OCI-LY7 (cell line): ENCODE measurements at regions of chr9 and their contacts with region 1.

Region 1: GRCh38 chr9:34252670-34253459 is 74.0 kb downstream of the UBAP1 start:
- DNase-seq: peak; percentile 65
- H3K4me3 ChIP-seq: no peak overlapping the region
- H3K27ac ChIP-seq: no peak overlapping the region
- H3K4me1 ChIP-seq: no peaks in the 10 kb centered on the region
- CTCF ChIP-seq: peak; percentile 87

Region 2: DNA sequence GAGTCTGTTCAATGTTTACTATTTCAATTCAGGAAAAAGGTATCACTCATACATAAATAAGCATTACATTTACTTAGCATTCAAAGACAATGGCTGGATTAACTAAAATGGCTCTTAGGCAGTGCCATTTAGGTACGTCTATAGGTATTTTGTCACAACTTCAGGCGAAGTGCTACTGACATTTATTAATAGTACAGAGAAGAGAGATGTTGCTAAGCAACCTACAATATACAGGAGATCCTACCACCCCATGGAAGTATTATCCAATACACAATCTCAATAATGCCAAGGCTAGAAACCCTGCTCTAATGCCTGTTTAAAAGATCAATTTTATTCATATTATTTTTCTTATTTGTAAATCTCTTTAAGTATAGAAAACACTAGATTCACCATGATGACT is 280.2 kb before region 1 on chr9:
- CTCF ChIA-PET with region 1: no interaction called
- POLR2A ChIA-PET with region 1: no interaction called
- intact Hi-C with region 1: loop called (anchors 5 kb)
- DNase-seq: no peak
- H3K4me3 ChIP-seq: no peak overlapping the region
- H3K27ac ChIP-seq: no peak overlapping the region
- H3K4me1 ChIP-seq: no peaks in the 10 kb centered on the region
- CTCF ChIP-seq: no peak

Region 3: DNA sequence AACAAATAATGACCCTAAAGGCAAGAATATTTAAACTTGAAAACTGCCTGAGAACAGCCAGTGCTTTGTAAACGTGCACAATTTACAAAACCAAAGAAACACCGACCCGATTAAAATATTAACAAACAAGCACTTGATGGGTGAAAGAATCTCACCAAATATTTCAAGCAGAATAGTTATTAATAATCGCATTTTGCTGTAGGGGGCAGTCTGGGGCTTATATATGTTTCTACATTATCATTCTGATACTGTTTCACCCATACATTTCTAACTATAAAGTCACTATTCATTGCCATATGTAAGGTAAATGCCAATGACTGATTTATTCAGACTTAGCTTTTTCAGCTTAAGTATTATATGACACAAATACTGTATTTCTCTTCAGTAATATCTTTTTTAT is 241.9 kb before region 1 on chr9:
- CTCF ChIA-PET with region 1: no interaction called
- POLR2A ChIA-PET with region 1: no interaction called
- intact Hi-C with region 1: loop called (anchors 5 kb)
- DNase-seq: peak; percentile 64
- H3K4me3 ChIP-seq: no peak overlapping the region
- H3K27ac ChIP-seq: no peak overlapping the region
- H3K4me1 ChIP-seq: no peaks in the 10 kb centered on the region
- CTCF ChIP-seq: peak; percentile 85

Region 4: DNA sequence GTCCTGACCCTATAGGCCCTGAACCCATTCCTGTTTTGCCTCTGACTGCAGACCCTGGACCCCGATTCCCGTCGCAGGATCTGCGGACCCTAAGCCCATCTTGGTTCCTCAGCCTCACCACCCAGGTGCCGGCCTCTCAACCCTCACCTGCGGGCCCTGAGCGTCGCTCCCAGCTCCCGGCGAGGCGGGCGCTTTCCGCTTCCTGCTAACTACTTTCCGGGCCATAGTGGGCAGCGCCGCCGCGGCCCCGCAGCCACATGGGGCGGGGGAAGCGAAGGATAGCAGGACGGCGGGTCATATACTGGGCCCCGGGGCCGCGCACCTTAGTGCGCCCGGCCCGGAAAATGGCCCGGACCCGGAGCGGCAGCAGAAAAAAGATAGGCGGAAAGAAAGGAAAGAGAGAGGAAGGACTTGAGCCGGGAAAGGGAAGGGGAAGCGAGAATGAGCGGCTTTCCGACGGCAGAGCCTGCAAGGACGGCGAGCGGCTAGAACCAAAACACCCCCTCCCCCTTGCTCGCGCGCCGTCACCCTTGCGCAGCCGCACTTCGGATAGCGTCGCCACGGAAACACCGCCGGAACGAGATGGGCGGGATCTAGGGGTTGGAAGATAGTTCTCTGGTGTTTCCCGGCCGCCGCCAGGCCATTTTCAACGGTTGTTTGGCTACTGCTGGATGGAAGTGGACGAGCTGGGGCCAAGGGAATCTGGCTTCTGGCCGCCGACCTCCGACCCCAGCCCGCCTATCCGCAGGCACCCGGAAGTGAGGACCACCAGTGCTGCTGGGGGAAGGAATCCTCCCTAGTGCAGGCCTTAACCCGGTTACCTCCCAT is 126.4 kb before region 1 on chr9 and contains the start of gene DCAF12:
- CTCF ChIA-PET with region 1: no interaction called
- POLR2A ChIA-PET with region 1: no interaction called
- intact Hi-C with region 1: loop called (anchors 1 kb)
- DNase-seq: peak; percentile 91
- H3K4me3 ChIP-seq: peak within 1 kb of the TSS; percentile 85
- H3K27ac ChIP-seq: peak within 1 kb of the TSS; percentile 81
- H3K4me1 ChIP-seq: peaks cover 49% of the 10 kb centered on the region
- CTCF ChIP-seq: no peak
- total RNA-seq, gene DCAF12: 21.9 and 31.7 TPM in 2 replicates

Region 5: GRCh38 chr9:34328987-34329832 is 76.3 kb after region 1 on chr9 and contains the starts of genes KIF24 and NUDT2:
- CTCF ChIA-PET with region 1: no interaction called
- POLR2A ChIA-PET with region 1: no interaction called
- intact Hi-C with region 1: no loop called
- DNase-seq: peak; percentile 100
- H3K4me3 ChIP-seq: peak within 1 kb of the TSS; percentile 98
- H3K27ac ChIP-seq: peak within 1 kb of the TSS; percentile 74
- H3K4me1 ChIP-seq: peaks cover 46% of the 10 kb centered on the region
- CTCF ChIP-seq: no peak
- total RNA-seq, gene KIF24: 16.3 and 19.4 TPM in 2 replicates
- total RNA-seq, gene NUDT2: 23.8 and 27.7 TPM in 2 replicates